Right lobe of liver (tissue), 6 donors: ENCODE measurements at regions of chr16 and their contacts with region 1.

Region 1: GRCh38 chr16:69112285-69113129 is 7.1 kb downstream of the HAS3 start:
- DNase-seq: peak; percentile 74 to 79 (median 75)
- ATAC-seq: peak; percentile 85 to 92 (median 88)
- H3K4me3 ChIP-seq: no peak overlapping the region
- H3K27ac ChIP-seq: no peak overlapping the region
- H3K4me1 ChIP-seq: peaks cover 0 to 5% (median under 1%) of the 10 kb centered on the region in 4 donors
- H3K27me3 ChIP-seq: no peaks in the 10 kb centered on the region
- CTCF ChIP-seq: peak; percentile 59 to 87 (median 84)
- POLR2A ChIP-seq: no peak

Region 2: GRCh38 chr16:68843482-68844210 is 268.9 kb before region 1 on chr16 and contains the start of gene TANGO6:
- intact Hi-C with region 1: loop called in 1 of 2 experiments (anchors 10 kb)
- DNase-seq: peak; percentile 84 to 87 (median 85)
- ATAC-seq: peak; percentile 92 to 94 (median 93)
- H3K4me3 ChIP-seq: peak within 1 kb of the TSS; percentile 73 to 89 (median 88)
- H3K27ac ChIP-seq: peak within 1 kb of the TSS; percentile 72 to 77 (median 73)
- H3K4me1 ChIP-seq: peaks cover 0 to 13% (median 0%) of the 10 kb centered on the region in 4 donors
- H3K27me3 ChIP-seq: no peaks in the 10 kb centered on the region
- CTCF ChIP-seq: peak in 3 of 4 donors; percentile 7 to 23 (median 20)
- POLR2A ChIP-seq: peak; percentile 72
- total RNA-seq, gene TANGO6: 10.9 to 15.5 (median 14.2) TPM

Region 3: DNA sequence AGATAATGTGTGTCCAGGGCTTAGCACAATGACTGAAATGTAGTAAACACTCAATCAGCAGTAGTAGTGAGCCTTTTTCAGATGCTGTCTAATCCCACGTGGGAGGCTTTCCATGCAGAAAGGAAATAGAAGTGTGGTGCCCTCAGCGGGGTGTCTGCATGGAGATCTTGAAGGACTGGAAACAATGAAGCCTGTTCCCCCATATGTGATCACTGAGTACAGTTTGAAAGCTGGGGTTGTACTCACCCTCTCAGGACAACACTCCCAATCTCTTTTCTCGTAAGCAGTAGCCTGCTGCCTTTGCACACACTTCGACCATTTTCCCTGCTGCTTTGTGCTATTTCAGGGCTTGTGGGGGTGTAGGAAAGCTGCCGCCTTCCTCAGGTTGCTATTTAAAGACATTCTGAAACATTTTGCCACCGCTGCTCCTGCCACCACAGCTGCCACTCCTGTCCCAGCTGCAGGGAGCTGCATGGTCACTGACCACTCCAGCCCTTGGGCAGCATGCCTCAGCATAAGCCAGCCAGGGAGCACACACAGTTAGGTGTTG is 47.7 kb before region 1 on chr16:
- intact Hi-C with region 1: no loop called
- DNase-seq: no peak
- ATAC-seq: no peak
- H3K4me3 ChIP-seq: no peak overlapping the region
- H3K27ac ChIP-seq: no peak overlapping the region
- H3K4me1 ChIP-seq: no peaks in the 10 kb centered on the region
- H3K27me3 ChIP-seq: no peaks in the 10 kb centered on the region
- CTCF ChIP-seq: no peak
- POLR2A ChIP-seq: no peak